CD8-positive, alpha-beta T cell (primary cell): ENCODE measurements at regions of chr5 and their contacts with region 1.

Region 1: DNA sequence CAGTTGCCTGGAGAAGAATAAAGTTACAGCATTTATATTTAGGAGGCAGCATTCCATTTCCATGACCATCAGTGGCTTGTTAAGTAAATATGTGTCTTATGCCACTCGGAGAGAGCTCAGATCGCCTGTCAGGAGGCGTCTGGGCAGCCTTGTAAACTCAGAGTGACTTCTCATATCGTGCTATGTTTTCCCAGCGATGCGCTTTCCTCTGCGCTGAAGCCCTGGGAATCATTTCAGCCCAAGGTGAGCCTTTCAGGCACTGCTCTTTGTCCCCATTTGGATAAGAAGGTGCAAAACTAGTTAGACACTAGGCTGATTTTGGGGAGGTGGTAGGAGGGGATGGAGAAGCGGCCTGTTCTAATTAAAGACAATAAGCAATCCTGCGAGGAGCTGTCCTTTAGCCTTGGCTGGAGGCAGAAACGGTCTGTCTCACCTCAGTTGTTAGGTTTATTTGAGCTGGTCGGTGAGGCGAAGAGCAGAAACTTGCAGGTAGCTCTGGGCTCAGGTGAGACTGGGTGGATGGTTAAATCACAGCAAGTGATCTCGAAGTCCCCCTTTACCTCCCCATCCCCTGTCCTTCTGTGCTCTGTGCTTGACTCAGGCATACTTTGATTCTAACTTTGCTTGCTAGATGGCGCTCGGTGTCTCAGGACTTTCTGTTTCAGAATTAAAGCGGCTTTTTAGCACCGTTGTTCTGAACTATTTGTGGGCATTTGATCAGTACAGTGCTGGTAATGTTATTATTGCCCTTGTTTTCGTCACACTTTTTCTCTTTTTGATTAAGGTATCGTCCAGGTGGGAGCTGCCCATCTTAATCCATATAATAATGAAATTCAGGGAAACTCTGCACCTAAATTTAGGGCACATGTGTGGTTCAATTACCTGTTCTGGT is 24.6 kb downstream of the NR2F1 start:
- DNase-seq: peak in 3 of 9 experiments; percentile 33 to 72 (median 61)
- ATAC-seq: peak; percentile 73
- H3K4me3 ChIP-seq: no peak overlapping the region
- H3K4me3 Mint-ChIP-seq: no peak overlapping the region
- H3K27ac ChIP-seq: no peak overlapping the region
- H3K27ac Mint-ChIP-seq: no peak overlapping the region
- H3K4me1 ChIP-seq: peaks cover 6% of the 10 kb centered on the region
- H3K4me1 Mint-ChIP-seq: peaks cover 21% of the 10 kb centered on the region
- H3K27me3 ChIP-seq: peaks cover 65 to 81% of the 10 kb centered on the region in 2 experiments
- H3K27me3 Mint-ChIP-seq: peaks cover 85% of the 10 kb centered on the region
- CTCF ChIP-seq: peak; percentile 53

Region 2: GRCh38 chr5:93596676-93597461 is 10.7 kb before region 1 on chr5:
- CTCF ChIA-PET with region 1: interaction called, 13 read pairs
- POLR2A ChIA-PET with region 1: no interaction called
- intact Hi-C with region 1: no loop called
- DNase-seq: peak in 1 of 9 experiments; percentile 41
- ATAC-seq: peak; percentile 20
- H3K4me3 ChIP-seq: no peak overlapping the region
- H3K4me3 Mint-ChIP-seq: no peak overlapping the region
- H3K27ac ChIP-seq: no peak overlapping the region
- H3K27ac Mint-ChIP-seq: no peak overlapping the region
- H3K4me1 ChIP-seq: no peaks in the 10 kb centered on the region
- H3K4me1 Mint-ChIP-seq: peaks cover 7% of the 10 kb centered on the region
- H3K27me3 ChIP-seq: peaks cover 61% of the 10 kb centered on the region in 2 experiments
- H3K27me3 Mint-ChIP-seq: peaks cover 53% of the 10 kb centered on the region
- CTCF ChIP-seq: no peak

Region 3: DNA sequence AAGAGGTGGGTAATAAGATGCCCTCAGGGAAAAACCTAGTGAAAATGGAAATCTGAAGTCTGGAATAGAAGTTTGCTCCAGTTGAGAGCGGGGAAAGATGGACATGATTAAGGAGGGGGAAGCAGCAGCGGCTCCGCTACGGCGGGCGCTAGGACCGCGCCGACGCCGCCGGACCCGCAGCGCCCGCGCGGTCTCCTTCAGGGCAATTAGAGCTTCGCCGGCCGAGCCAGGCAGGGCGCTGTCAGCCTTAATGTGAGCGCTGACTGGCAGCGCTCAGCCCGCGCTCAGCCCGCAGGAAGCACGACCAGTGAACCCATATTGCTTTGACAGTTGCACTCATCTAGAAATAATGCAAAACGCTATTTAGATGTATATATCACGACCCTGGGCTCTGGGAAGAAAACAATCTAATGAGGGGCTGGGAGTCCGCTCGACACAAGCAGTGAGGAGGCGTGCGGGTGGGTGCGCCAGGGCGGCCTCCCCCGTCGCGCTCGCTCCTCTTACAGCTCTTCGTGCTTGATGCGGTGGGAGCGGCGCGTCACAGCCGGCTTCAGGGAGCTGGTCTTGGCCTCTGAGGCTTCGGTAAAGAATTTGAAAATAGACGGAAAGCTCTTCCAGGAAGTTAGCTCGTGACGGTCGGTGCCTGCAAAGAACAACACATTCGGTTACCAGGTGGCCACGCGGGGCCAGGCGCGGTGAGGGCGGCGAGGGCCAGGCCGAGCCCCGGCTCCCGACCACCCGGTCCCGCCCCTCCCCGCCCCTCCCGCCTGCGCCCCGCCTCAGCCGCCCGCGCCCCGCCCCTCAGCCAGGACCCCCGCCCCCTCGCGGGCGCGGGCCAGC is 13.1 kb after region 1 on chr5:
- CTCF ChIA-PET with region 1: no interaction called
- POLR2A ChIA-PET with region 1: interaction called, 6 read pairs
- intact Hi-C with region 1: loop called in 1 of 2 experiments (anchors 1 kb)
- DNase-seq: peak; percentile 18 to 78 (median 58)
- ATAC-seq: peak; percentile 64
- H3K4me3 ChIP-seq: peak overlapping the region; percentile 48 to 61
- H3K4me3 Mint-ChIP-seq: peak overlapping the region; percentile 93
- H3K27ac ChIP-seq: peak overlapping the region in 1 of 2 experiments; percentile 8
- H3K27ac Mint-ChIP-seq: peak overlapping the region; percentile 84
- H3K4me1 ChIP-seq: peaks cover 21% of the 10 kb centered on the region
- H3K4me1 Mint-ChIP-seq: peaks cover 23% of the 10 kb centered on the region
- H3K27me3 ChIP-seq: no peaks in the 10 kb centered on the region
- H3K27me3 Mint-ChIP-seq: peaks cover 10% of the 10 kb centered on the region
- CTCF ChIP-seq: no peak

Region 4: DNA sequence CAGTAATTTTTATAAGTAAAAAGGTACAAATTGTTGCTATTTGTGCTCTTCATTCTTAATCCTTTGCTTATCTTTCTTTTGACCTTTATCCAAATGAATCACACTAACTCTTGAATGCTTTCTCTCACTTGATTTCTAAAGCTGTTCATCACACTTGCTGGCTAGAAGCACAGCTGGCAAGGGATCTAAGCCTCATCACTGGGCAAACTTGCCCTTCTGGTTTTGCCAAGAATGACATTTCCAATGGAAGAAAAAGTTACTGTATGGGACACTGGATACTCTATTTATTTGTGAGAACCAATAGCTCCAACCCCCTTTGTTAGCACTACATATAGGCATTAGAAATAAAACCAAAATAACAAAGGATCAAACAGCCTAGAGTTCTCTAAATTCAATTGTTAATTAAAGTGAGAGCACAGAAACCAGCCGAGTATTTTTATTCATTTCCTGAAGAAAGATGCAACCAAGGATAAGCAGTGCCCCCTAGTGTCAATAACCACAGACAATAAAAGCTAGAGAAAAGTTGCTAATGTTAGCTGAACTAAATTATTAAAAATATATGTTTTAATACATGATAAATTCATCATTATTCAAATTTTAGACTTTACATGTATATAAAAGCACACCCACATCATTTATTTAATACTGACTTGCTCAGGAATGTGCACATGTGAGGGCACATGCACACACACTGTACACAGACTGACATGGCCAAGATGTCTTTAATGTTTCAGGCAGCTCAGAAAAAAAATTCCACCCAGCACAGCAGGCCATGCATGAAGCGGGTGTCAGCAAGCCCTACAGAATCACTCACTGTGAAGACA is 193.6 kb after region 1 on chr5:
- CTCF ChIA-PET with region 1: interaction called, 7 read pairs
- POLR2A ChIA-PET with region 1: no interaction called
- intact Hi-C with region 1: loop called (anchors 1 kb)
- DNase-seq: peak in 4 of 9 experiments; percentile 15 to 65 (median 42)
- ATAC-seq: no peak
- H3K4me3 ChIP-seq: no peak overlapping the region
- H3K4me3 Mint-ChIP-seq: no peak overlapping the region
- H3K27ac ChIP-seq: no peak overlapping the region
- H3K27ac Mint-ChIP-seq: no peak overlapping the region
- H3K4me1 ChIP-seq: no peaks in the 10 kb centered on the region
- H3K4me1 Mint-ChIP-seq: no peaks in the 10 kb centered on the region
- H3K27me3 ChIP-seq: no peaks in the 10 kb centered on the region
- H3K27me3 Mint-ChIP-seq: no peaks in the 10 kb centered on the region
- CTCF ChIP-seq: peak; percentile 75